HCT116 (cell line): ENCODE measurements at regions of chr7 and their contacts with region 1.

Region 1: DNA sequence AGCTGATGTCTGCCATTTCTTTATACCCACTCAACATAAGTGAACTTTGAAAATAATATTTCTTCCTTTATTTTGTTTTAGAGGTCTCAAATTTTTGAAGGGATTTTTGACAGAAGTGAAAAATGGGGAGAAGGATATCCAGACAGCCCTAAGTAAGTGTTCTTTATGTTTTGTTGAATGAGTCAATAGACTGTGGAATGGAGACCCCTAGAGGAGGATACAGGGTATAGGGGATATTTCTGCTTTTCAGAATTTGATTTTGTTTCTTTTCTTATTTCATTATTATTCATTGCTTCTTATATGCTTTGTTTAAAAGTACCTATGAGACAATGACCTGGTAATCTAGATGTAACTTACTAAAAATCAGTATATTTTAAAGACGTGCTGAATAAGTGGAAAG is 34.4 kb downstream of the PLEKHA8 start:
- DNase-seq: peak; percentile 13
- ATAC-seq: peak; percentile 79
- H3K4me3 ChIP-seq: no peak overlapping the region
- H3K27ac ChIP-seq: no peak overlapping the region
- H3K4me1 ChIP-seq: no peaks in the 10 kb centered on the region
- H3K27me3 ChIP-seq: no peaks in the 10 kb centered on the region
- CTCF ChIP-seq: peak; percentile 62 to 80 (median 68); a peak in 5 of 6 replicates
- POLR2A ChIP-seq: no peak
- RAD21 ChIP-seq: peak; percentile 76

Region 2: GRCh38 chr7:29639881-29640595 is 422.6 kb before region 1 on chr7:
- CTCF ChIA-PET with region 1: interaction called, 8 read pairs
- POLR2A ChIA-PET with region 1: no interaction called
- RAD21 ChIA-PET with region 1: no interaction called
- intact Hi-C with region 1: loop called (anchors 2 kb)
- DNase-seq: no peak
- ATAC-seq: no peak
- H3K4me3 ChIP-seq: no peak overlapping the region
- H3K27ac ChIP-seq: no peak overlapping the region
- H3K4me1 ChIP-seq: peaks cover 11 to 31% of the 10 kb centered on the region in 2 experiments
- H3K27me3 ChIP-seq: no peaks in the 10 kb centered on the region
- CTCF ChIP-seq: no peak
- POLR2A ChIP-seq: no peak
- RAD21 ChIP-seq: no peak

Region 3: GRCh38 chr7:29878081-29878688 is 184.4 kb before region 1 on chr7:
- CTCF ChIA-PET with region 1: interaction called, 12 read pairs
- POLR2A ChIA-PET with region 1: no interaction called
- RAD21 ChIA-PET with region 1: no interaction called
- intact Hi-C with region 1: loop called (anchors 2 kb)
- DNase-seq: no peak
- ATAC-seq: peak; percentile 52; the same call in 1 of the 2 replicates
- H3K4me3 ChIP-seq: no peak overlapping the region
- H3K27ac ChIP-seq: no peak overlapping the region
- H3K4me1 ChIP-seq: no peaks in the 10 kb centered on the region
- H3K27me3 ChIP-seq: no peaks in the 10 kb centered on the region
- CTCF ChIP-seq: peak; percentile 51 to 72 (median 59); a peak in 5 of 6 replicates
- POLR2A ChIP-seq: no peak
- RAD21 ChIP-seq: peak; percentile 63

Region 4: DNA sequence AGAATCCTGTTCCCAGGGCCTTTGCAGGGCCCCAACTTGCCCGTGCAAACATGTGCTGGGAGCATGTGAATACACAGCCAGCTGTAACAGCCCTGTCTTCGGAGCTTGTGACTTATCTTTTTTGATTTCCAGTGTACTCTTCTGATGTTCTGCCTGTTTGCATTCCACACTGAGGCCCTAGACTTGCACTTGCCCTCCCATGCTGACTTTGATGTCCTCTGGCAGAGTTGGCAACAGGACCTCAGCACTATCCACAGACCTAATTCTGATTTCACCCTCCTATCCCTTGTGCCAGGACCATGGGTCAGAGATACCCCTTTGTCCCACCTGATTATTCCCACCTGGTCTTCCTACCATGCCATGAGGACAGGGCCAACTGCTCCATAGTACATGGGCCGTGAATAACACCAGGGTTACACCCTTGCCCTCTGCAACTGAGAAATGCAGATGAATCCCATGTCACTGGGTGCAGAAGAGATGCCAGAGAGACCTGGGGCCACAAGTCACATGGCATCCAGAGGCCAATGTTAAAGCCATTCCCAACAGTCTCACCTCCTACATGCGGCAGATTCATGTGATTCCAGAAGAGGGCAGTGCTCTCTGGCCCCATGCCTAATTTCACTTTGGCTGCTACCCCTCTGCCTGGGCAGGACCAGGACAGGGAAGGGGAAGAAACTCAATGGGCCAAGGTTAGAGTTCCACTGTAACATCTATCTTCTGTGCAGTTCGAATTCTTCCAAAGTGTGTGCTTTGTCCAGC is 116.0 kb before region 1 on chr7:
- CTCF ChIA-PET with region 1: interaction called, 3 read pairs
- POLR2A ChIA-PET with region 1: no interaction called
- RAD21 ChIA-PET with region 1: no interaction called
- intact Hi-C with region 1: loop called (anchors 1 kb)
- DNase-seq: peak; percentile 42
- ATAC-seq: peak; percentile 91
- H3K4me3 ChIP-seq: no peak overlapping the region
- H3K27ac ChIP-seq: no peak overlapping the region
- H3K4me1 ChIP-seq: no peaks in the 10 kb centered on the region
- H3K27me3 ChIP-seq: no peaks in the 10 kb centered on the region
- CTCF ChIP-seq: peak; percentile 55 to 59 (median 58); a peak in 5 of 6 replicates
- POLR2A ChIP-seq: no peak
- RAD21 ChIP-seq: peak; percentile 61

Region 5: GRCh38 chr7:30412810-30413504 is 350.4 kb after region 1 on chr7:
- CTCF ChIA-PET with region 1: no interaction called
- POLR2A ChIA-PET with region 1: no interaction called
- RAD21 ChIA-PET with region 1: no interaction called
- intact Hi-C with region 1: loop called (anchors 5 kb)
- DNase-seq: peak; percentile 68
- ATAC-seq: peak; percentile 97
- H3K4me3 ChIP-seq: no peak overlapping the region
- H3K27ac ChIP-seq: no peak overlapping the region
- H3K4me1 ChIP-seq: no peaks in the 10 kb centered on the region; a peak in 1 of 4 replicates
- H3K27me3 ChIP-seq: no peaks in the 10 kb centered on the region
- CTCF ChIP-seq: peak; percentile 34 to 77 (median 66); a peak in 5 of 6 replicates
- POLR2A ChIP-seq: no peak
- RAD21 ChIP-seq: peak; percentile 90